HEK293 (cell line): ENCODE measurements at regions of chr21 and their contacts with region 1.

Region 1: DNA sequence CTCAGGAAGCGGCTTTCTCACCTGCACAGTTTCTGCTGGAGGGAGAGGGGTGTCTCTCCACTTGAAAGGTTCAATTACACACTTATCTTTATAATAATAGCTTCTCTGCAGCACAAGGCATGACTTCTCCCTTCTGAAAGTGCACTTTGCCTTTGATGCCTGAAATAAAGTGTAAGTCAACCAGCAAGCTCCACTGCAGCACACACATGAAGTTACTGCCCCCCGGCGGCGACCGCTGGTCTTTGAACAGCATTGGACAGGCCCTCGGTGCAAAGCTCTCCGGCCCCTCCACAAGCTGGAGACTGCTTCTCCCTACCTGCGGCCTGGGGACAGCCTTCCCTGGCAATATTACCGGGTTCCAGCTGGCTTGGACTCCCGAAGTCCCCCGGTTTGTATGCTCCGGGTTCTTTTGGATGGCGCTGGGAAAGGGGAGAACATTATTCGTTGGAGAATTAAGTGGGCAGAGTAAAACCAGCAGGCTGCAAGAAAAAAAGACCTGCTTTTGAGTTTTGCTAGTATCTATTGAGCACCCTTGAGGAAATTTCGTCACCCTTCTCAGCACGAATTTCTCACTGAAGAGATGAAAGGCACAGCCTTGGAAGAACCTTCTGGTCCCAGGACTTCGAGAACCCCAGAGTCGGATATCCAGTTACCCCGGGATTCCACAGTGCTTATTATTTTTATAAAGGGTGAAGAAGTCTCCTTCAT is 11.8 kb downstream of the RCAN1 start:
- H3K4me3 ChIP-seq: no peak overlapping the region
- H3K27ac ChIP-seq: no peak overlapping the region
- H3K4me1 ChIP-seq: peaks cover 5% of the 10 kb centered on the region
- CTCF ChIP-seq: no peak

Region 2: GRCh38 chr21:34367321-34367935 is 235.7 kb before region 1 on chr21:
- CTCF ChIA-PET with region 1: interaction called, 18 read pairs
- POLR2A ChIA-PET with region 1: no interaction called
- H3K4me3 ChIP-seq: no peak overlapping the region
- H3K27ac ChIP-seq: no peak overlapping the region
- H3K4me1 ChIP-seq: no peaks in the 10 kb centered on the region
- CTCF ChIP-seq: no peak

Region 3: GRCh38 chr21:34520764-34521508 is 82.2 kb before region 1 on chr21:
- CTCF ChIA-PET with region 1: interaction called, 159 read pairs
- POLR2A ChIA-PET with region 1: no interaction called
- H3K4me3 ChIP-seq: no peak overlapping the region
- H3K27ac ChIP-seq: no peak overlapping the region
- H3K4me1 ChIP-seq: peaks cover under 1% of the 10 kb centered on the region
- CTCF ChIP-seq: no peak

Region 4: DNA sequence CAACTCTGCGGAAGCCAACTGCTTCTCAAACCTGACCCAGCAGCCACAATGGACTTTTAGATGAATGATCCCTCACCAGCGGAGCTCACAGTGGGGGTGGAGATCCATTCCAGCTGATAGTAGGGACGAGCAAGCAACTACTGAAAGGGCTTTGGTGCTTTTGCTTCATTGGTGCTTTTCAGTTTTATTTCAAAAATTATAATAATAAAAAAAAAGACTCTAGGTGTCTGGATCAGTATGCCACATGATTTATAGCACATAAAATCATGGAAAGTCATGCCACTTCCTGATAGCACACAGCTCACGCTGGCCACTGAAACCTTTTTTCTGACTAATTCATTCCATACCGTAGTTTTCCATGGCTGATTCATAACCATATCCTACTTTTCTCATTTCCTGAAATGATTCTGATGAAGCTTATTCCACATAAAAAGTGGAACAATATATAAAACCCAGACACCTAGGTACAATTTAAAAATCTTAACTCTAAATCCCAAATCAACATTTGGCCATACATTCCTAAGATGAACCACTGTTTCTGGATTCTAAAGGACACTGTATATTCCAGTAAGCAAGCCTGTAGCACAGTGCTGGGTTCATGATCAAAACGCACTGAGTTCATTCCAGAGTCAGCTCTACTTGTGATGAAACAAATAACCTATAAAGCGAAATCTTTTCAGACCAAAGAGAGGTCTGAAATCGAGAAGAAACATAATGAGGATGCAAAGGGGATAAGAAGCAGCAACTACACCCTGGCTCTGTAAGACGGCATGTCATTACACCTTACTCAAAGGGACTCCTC is 49.8 kb before region 1 on chr21:
- CTCF ChIA-PET with region 1: interaction called, 16 read pairs
- POLR2A ChIA-PET with region 1: no interaction called
- H3K4me3 ChIP-seq: no peak overlapping the region
- H3K27ac ChIP-seq: no peak overlapping the region
- H3K4me1 ChIP-seq: no peaks in the 10 kb centered on the region
- CTCF ChIP-seq: no peak

Region 5: GRCh38 chr21:34592120-34592955 is 10.8 kb before region 1 on chr21:
- CTCF ChIA-PET with region 1: interaction called, 36 read pairs
- POLR2A ChIA-PET with region 1: no interaction called
- H3K4me3 ChIP-seq: no peak overlapping the region
- H3K27ac ChIP-seq: no peak overlapping the region
- H3K4me1 ChIP-seq: no peaks in the 10 kb centered on the region
- CTCF ChIP-seq: no peak

Region 6: GRCh38 chr21:34630536-34631143 is 27.5 kb after region 1 on chr21:
- CTCF ChIA-PET with region 1: interaction called, 31 read pairs
- POLR2A ChIA-PET with region 1: no interaction called
- H3K4me3 ChIP-seq: no peak overlapping the region
- H3K27ac ChIP-seq: no peak overlapping the region
- H3K4me1 ChIP-seq: no peaks in the 10 kb centered on the region
- CTCF ChIP-seq: peak; percentile 75